H1 (cell line): ENCODE measurements at regions of chr19 and their contacts with region 1.

Region 1: DNA sequence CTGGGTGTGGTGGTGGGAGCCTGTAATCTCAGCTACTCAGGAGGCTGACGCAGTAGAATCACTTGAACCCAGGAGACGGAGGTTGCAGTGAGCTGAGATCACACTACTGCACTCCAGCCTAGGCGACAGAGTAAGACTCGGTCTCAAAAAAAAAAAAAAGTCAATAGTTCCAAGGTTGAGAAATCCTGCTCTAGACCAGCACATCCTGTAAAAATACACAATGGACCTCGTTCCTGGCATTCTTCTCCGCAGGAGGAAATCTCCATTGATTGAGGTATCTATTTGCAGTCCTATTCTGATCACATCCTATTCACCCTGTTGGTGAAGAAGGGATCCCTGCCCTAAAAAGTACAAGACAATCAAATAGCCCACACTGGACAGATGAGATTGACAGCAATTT is 15.2 kb downstream of the ZFP14 start:
- DNase-seq: peak in 1 of 2 experiments; percentile 26
- H3K4me3 ChIP-seq: no peak overlapping the region
- H3K27ac ChIP-seq: no peak overlapping the region
- H3K4me1 ChIP-seq: no peaks in the 10 kb centered on the region
- H3K27me3 ChIP-seq: no peaks in the 10 kb centered on the region
- CTCF ChIP-seq: no peak
- EP300 ChIP-seq: no peak
- POLR2A ChIP-seq: no peak
- RAD21 ChIP-seq: no peak

Region 2: DNA sequence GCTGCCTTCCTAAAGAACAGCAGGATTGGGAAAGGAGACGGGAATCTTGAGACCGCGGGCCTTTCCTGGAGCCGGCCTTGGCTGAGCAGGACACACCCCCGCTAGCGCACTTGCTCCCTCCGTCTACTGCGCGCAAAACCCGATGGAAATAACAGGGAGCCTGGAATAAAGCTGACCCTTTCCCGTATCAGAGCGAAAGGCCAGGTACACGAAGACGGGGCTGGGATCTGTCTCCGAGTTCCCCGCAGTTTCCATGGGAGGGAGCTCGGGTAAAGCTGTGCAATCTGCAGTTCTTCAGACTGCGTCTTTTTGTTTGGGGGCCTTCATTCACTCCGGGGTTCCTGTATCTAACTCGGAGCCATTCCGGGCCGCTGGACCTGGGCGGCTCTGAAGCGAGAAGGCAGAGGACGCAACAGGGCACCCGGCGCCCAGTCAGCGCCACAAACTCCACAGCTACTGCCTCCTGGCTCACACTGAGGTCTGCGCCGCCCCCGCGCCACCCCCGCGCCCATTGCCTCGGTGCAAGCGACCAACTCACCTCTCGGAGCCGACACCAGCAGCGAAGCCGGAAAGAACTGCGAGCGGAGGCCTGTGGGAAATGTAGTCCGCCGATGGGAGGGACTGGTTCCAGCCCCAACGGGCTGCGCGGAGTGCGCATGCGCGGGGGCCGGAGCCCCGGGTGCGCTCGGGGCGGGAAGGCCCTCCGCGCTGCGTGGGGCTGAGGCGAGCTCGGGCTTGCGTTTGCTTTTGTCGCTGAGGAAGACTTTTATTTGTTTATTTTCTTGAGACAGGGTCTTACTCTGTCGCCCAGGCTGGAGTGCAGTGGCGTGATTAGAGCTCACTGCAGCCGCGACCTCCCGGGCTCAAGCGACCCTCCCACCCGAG is 15.0 kb after region 1 on chr19 and contains the start of gene ZFP14:
- CTCF ChIA-PET with region 1: interaction called, 4 read pairs
- POLR2A ChIA-PET with region 1: interaction called, 28 read pairs
- DNase-seq: peak; percentile 82 to 91
- H3K4me3 ChIP-seq: peak within 1 kb of the TSS; percentile 50 to 92 (median 86)
- H3K27ac ChIP-seq: peak within 1 kb of the TSS; percentile 47; the same call in 1 of the 2 replicates
- H3K4me1 ChIP-seq: no peaks in the 10 kb centered on the region; a peak in 1 of 7 replicates
- H3K27me3 ChIP-seq: no peaks in the 10 kb centered on the region
- CTCF ChIP-seq: peak in 2 of 3 experiments; percentile 7 to 15; a peak in 2 of 4 replicates
- EP300 ChIP-seq: 0 out of 3 replicates have a peak, but pooled peaks of 1 of the 2 experiments have one; percentile 50
- POLR2A ChIP-seq: peak in 1 of 2 experiments; percentile 55; a peak in 2 of 3 replicates
- RAD21 ChIP-seq: peak; percentile 39 to 51
- total RNA-seq, gene ZFP14: 8.2 and 8.8 TPM in 2 replicates